ENCODE measurements at regions of chr15 and their contacts with region 1.

Region 1: DNA sequence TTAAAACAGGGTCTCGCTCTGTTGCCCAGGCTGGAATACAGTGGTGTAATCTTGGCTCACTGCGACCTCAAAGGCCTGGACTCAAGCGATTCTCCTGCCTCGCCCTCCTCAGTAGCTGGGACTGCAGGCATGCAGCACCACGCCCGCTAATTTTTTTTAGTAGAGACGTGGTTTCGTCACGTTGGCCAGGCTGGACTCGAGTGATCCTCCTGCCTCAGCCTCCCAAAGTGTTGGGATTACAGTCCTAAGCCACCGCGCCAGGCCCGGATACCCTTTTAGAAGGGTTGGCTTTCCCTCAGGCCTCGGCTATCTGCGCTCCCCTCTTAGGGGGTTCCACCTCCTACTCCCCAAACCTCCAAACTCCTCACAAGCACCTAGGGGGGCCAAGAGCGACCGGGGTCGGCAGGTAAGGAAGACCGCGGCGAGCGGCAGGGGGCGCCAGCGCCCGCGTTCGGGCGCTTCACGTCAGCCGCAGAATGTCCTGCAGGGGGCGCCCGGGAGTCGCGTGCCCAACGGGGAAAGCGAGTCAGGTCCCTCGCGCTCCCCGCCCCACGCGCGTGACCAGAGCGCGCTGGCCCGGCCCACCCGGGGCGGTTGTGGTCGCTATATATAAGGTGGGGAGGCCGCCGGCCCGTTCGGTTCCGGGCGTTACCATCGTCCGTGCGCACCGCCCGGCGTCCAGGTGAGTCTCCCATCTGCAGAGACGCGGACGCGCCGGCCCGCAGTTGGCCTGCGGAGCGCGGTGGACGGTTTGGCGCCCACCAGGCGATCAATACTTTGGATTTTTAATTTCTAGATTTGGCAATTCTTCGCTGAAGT is 51.8 kb upstream of the GATM start:
- DNase-seq: peak; percentile 68 to 95 (median 83)
- ATAC-seq: peak; percentile 97
- H3K4me3 ChIP-seq: peak overlapping the region; percentile 53
- H3K4me3 Mint-ChIP-seq: peak overlapping the region in 9 of 10 donors; percentile 40 to 72 (median 62)
- H3K27ac ChIP-seq: no peak overlapping the region
- H3K27ac Mint-ChIP-seq: peak overlapping the region in 1 of 9 donors; percentile 13
- H3K4me1 ChIP-seq: no peaks in the 10 kb centered on the region
- H3K4me1 Mint-ChIP-seq: peaks cover 0 to 5% (median 1%) of the 10 kb centered on the region in 7 donors
- H3K27me3 ChIP-seq: no peaks in the 10 kb centered on the region
- H3K27me3 Mint-ChIP-seq: peaks cover 0 to 37% (median 5%) of the 10 kb centered on the region in 5 donors

Region 2: GRCh38 chr15:45414215-45414885 is 15.8 kb before region 1 on chr15:
- CTCF ChIA-PET with region 1: interaction called, 18 read pairs
- POLR2A ChIA-PET with region 1: interaction called, 4 read pairs
- intact Hi-C with region 1: no loop called
- DNase-seq: peak in 1 of 9 donors; percentile 7
- ATAC-seq: no peak
- H3K4me3 ChIP-seq: no peak overlapping the region
- H3K4me3 Mint-ChIP-seq: peak overlapping the region in 4 of 10 donors; percentile 33 to 54 (median 42)
- H3K27ac ChIP-seq: no peak overlapping the region
- H3K27ac Mint-ChIP-seq: peak overlapping the region in 8 of 9 donors; percentile 3 to 62 (median 32)
- H3K4me1 ChIP-seq: peaks cover 6 to 15% of the 10 kb centered on the region in 2 donors
- H3K4me1 Mint-ChIP-seq: peaks cover 20 to 32% (median 24%) of the 10 kb centered on the region in 7 donors
- H3K27me3 ChIP-seq: no peaks in the 10 kb centered on the region
- H3K27me3 Mint-ChIP-seq: no peaks in the 10 kb centered on the region

Region 3: DNA sequence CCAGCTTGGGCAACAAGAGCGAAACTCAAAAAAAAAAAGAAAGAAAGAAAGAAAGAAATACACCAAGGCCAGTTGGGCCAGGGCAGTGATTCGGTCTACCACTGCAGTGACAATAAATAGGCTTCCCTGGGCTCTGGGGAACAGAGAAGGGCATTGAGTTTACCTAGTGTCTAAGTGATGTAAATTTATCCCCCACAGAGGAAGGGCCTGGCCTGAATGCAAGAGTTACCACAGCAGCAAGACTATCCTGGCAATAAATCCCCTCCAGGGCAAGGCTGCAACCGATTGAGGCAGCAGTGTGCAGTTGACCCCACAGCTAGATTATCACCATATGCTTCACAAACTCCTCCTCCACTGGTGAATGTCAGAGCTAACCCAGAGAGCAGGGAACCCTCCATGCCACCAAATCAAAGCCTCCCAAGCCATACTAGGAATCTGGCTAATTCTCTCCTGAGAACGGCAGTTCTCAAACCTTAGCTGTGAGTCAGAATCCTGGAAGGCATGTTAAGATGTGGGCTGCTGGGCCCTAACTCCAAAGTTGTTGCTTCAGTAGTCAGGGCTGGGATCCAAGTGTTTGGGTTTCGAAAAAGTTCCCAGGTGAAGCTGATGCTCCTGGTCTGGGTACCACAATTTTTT is 12.4 kb after region 1 on chr15:
- CTCF ChIA-PET with region 1: interaction called, 10 read pairs
- POLR2A ChIA-PET with region 1: no interaction called
- intact Hi-C with region 1: no loop called
- DNase-seq: no peak
- ATAC-seq: no peak
- H3K4me3 ChIP-seq: no peak overlapping the region
- H3K4me3 Mint-ChIP-seq: no peak overlapping the region
- H3K27ac ChIP-seq: no peak overlapping the region
- H3K27ac Mint-ChIP-seq: no peak overlapping the region
- H3K4me1 ChIP-seq: no peaks in the 10 kb centered on the region
- H3K4me1 Mint-ChIP-seq: no peaks in the 10 kb centered on the region
- H3K27me3 ChIP-seq: no peaks in the 10 kb centered on the region
- H3K27me3 Mint-ChIP-seq: peaks cover 0 to 4% (median 0%) of the 10 kb centered on the region in 5 donors

Region 4: DNA sequence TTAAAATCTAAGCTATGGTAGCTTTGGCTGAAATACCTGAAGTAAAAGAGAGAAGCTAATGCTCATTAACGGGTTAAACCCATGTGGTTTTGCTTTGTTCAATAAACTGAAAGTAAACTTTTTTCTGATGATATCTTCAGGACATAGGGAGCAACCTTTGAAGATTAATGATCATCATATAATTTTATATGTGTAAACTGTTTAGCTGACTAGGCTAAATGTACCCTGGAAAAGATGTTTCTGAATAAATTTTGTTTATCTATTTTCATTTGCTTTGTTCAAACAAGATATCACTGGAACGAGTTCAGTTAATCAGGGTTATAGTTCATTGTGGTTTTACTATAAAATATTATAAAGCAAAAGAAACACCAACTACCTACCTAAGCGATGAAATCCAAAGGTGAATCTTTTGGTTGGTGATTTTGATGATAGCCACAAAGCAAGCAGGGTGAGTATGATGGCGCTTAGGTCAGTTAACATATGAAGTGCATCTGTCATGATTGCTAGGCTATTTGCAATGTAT is 80.6 kb after region 1 on chr15:
- CTCF ChIA-PET with region 1: no interaction called
- POLR2A ChIA-PET with region 1: no interaction called
- intact Hi-C with region 1: no loop called
- DNase-seq: no peak
- ATAC-seq: no peak
- H3K4me3 ChIP-seq: no peak overlapping the region
- H3K4me3 Mint-ChIP-seq: no peak overlapping the region
- H3K27ac ChIP-seq: no peak overlapping the region
- H3K27ac Mint-ChIP-seq: no peak overlapping the region
- H3K4me1 ChIP-seq: no peaks in the 10 kb centered on the region
- H3K4me1 Mint-ChIP-seq: peaks cover 0 to 6% (median 0%) of the 10 kb centered on the region in 7 donors
- H3K27me3 ChIP-seq: no peaks in the 10 kb centered on the region
- H3K27me3 Mint-ChIP-seq: no peaks in the 10 kb centered on the region